ENCODE measurements at regions of chr1 and their contacts with region 1.

Region 1: GRCh38 chr1:42931108-42931539 is 27.5 kb downstream of the SLC2A1 start:
- DNase-seq: peak; percentile 67 to 73 (median 71)
- H3K4me3 ChIP-seq: peak overlapping the region in 1 of 2 donors; percentile 29
- H3K4me3 Mint-ChIP-seq: peak overlapping the region; percentile 75 to 92 (median 82)
- H3K27ac ChIP-seq: peak overlapping the region; percentile 53
- H3K27ac Mint-ChIP-seq: peak overlapping the region; percentile 92 to 98 (median 96)
- H3K4me1 ChIP-seq: peaks cover 64% of the 10 kb centered on the region
- H3K4me1 Mint-ChIP-seq: peaks cover 47 to 75% (median 62%) of the 10 kb centered on the region in 4 donors
- H3K27me3 ChIP-seq: no peaks in the 10 kb centered on the region
- H3K27me3 Mint-ChIP-seq: no peaks in the 10 kb centered on the region

Region 2: DNA sequence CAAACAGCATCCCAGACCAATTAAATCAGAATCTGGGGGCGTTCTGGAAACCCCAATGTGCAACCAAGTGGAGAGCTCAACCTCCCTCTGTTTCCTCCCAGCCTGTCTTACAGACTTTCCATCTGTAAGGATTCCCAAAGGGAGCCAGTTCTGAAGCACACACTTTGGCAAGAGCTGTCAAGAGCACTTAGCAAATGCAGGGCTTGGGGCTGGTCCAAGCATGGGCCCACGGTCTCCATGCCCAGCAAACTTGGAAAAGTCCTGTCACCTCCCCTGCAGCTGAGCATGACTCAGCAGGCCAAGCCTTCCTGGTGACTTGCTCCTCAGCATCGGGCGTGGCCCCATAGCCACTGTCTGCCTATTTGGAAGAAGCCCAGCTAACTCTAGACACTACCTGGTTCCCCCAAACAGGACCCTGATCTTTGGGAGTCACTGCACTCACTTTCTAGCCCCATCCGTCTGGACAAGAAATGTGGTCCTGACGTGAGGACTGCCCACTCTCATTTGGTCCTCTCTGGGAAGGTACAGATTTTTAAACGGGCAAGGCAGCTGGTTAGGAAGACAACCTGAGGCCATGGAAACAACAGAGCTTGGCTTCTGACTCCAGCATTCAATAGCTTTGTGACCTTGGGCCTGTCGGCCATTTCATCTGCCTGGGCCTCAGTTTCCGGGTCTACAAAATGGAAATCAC is 10.7 kb after region 1 on chr1:
- CTCF ChIA-PET with region 1: interaction called, 20 read pairs
- POLR2A ChIA-PET with region 1: interaction called, 555 read pairs
- intact Hi-C with region 1: no loop called
- DNase-seq: no peak
- H3K4me3 ChIP-seq: no peak overlapping the region
- H3K4me3 Mint-ChIP-seq: peak overlapping the region in 5 of 8 donors; percentile 27 to 84 (median 74)
- H3K27ac ChIP-seq: peak overlapping the region; percentile 52
- H3K27ac Mint-ChIP-seq: peak overlapping the region; percentile 59 to 91 (median 89)
- H3K4me1 ChIP-seq: peaks cover 98% of the 10 kb centered on the region
- H3K4me1 Mint-ChIP-seq: peaks cover 80 to 100% (median 93%) of the 10 kb centered on the region in 4 donors
- H3K27me3 ChIP-seq: no peaks in the 10 kb centered on the region
- H3K27me3 Mint-ChIP-seq: no peaks in the 10 kb centered on the region

Region 3: GRCh38 chr1:42952303-42953001 is 21.3 kb after region 1 on chr1:
- CTCF ChIA-PET with region 1: interaction called, 18 read pairs
- POLR2A ChIA-PET with region 1: interaction called, 555 read pairs
- intact Hi-C with region 1: no loop called
- DNase-seq: peak in 3 of 5 donors; percentile 32 to 47 (median 37)
- H3K4me3 ChIP-seq: peak overlapping the region; percentile 1 to 38
- H3K4me3 Mint-ChIP-seq: peak overlapping the region; percentile 36 to 72 (median 62)
- H3K27ac ChIP-seq: peak overlapping the region; percentile 50
- H3K27ac Mint-ChIP-seq: peak overlapping the region; percentile 52 to 97 (median 70)
- H3K4me1 ChIP-seq: peaks cover 93% of the 10 kb centered on the region
- H3K4me1 Mint-ChIP-seq: peaks cover 60 to 94% (median 83%) of the 10 kb centered on the region in 4 donors
- H3K27me3 ChIP-seq: no peaks in the 10 kb centered on the region
- H3K27me3 Mint-ChIP-seq: no peaks in the 10 kb centered on the region

Region 4: GRCh38 chr1:42958488-42959319 is 27.6 kb after region 1 on chr1 and contains the start of gene SLC2A1:
- CTCF ChIA-PET with region 1: interaction called, 18 read pairs
- POLR2A ChIA-PET with region 1: interaction called, 555 read pairs
- intact Hi-C with region 1: loop called (anchors 1 kb)
- DNase-seq: peak; percentile 92 to 97 (median 95)
- H3K4me3 ChIP-seq: peak within 1 kb of the TSS; percentile 66 to 78
- H3K4me3 Mint-ChIP-seq: peak within 1 kb of the TSS; percentile 97 to 99 (median 98)
- H3K27ac ChIP-seq: peak within 1 kb of the TSS; percentile 76
- H3K27ac Mint-ChIP-seq: peak within 1 kb of the TSS; percentile 97 to 99 (median 98)
- H3K4me1 ChIP-seq: peaks cover 59% of the 10 kb centered on the region
- H3K4me1 Mint-ChIP-seq: peaks cover 35 to 79% (median 51%) of the 10 kb centered on the region in 4 donors
- H3K27me3 ChIP-seq: no peaks in the 10 kb centered on the region
- H3K27me3 Mint-ChIP-seq: no peaks in the 10 kb centered on the region
- total RNA-seq, gene SLC2A1: 57.5 to 58.4 TPM